ENCODE measurements at regions of chr4 and their contacts with region 1.

Region 1: DNA sequence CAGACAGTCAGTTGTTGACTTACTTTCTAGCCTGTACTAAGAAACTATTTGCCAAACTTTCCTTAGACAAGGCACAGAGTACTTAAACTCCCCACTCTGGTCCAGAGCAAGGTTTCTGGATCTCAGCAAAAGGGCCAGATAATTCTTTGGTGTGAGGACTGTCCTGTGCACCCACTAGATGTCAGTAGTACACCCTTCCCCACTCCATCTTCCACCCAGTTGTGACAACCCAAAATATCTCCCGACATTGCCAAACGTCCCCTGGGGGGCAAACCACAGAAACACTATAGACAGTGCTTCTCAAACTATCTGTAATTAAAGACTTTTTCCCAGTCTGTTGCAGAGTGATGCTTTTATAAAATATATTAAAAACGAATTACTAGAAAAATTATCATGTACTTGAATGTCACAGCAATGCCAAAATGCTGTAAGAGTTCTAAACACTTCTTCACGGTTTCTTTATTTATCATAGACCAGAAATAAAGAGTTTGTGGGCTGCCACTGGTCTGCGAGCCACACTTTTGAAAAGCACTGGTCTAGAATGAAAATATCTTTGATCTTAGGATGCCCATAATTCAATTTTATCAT is 203.5 kb downstream of the PRDM5 start:
- DNase-seq: peak in 3 of 5 donors; percentile 29 to 30 (median 29)
- ATAC-seq: peak; percentile 83 to 95 (median 87)
- H3K4me3 ChIP-seq: peak overlapping the region in 2 of 12 donors; percentile 5 to 25
- H3K27ac ChIP-seq: no peak overlapping the region
- H3K4me1 ChIP-seq: peaks cover 0 to 21% (median 2%) of the 10 kb centered on the region in 12 donors
- H3K27me3 ChIP-seq: no peaks in the 10 kb centered on the region
- CTCF ChIP-seq: peak; percentile 39 to 76 (median 64)
- POLR2A ChIP-seq: no peak

Region 2: GRCh38 chr4:120163895-120164294 is 555.2 kb before region 1 on chr4:
- intact Hi-C with region 1: loop called in 2 of 10 experiments (anchors 5 to 10 kb)
- DNase-seq: no peak
- ATAC-seq: peak in 2 of 4 donors; percentile 37 to 57
- H3K4me3 ChIP-seq: no peak overlapping the region
- H3K27ac ChIP-seq: no peak overlapping the region
- H3K4me1 ChIP-seq: peaks cover 0 to 13% (median 0%) of the 10 kb centered on the region in 12 donors
- H3K27me3 ChIP-seq: no peaks in the 10 kb centered on the region
- CTCF ChIP-seq: no peak
- POLR2A ChIP-seq: no peak

Region 3: DNA sequence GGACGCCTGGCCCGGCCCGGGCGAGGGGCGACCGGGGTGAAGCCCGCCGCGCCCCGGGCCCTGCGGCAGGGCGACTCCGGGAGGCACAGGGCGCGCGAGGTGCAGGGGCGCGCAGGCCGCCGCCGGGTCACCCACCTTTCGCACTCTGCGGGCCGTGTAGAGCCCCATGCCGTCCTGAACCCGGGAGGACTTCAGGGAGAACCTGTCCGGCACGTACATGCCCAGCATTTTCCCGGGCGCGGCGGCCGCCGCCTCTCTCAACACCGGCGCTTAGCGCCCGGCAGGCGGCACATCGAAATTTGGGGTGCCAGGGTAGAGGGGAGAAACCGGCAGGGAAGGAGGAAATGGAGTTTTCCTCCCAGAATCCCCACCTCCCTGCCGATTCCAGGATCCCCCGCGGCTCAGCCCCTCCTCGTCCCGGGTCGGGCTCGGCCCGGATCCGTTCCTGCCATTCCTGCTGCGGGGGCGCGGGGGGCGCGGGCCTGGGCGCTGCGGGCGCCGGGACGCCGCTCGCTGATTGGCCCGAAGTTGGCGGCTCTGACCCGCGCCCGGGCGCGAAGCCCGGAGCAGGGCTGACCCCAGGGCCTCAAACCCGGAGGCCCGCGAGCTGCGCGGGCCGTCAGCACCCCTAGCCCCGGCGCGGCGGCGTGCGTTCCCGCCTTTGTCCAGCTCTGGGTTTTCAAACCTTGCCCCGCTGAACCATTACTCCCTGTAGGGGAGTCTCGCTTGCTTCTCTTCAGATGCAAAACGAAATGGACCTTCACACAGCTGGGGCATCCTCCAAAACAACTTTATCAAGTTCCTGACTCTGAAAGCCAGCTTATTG is 203.5 kb after region 1 on chr4 and contains the start of gene PRDM5:
- intact Hi-C with region 1: loop called in 6 of 10 experiments (anchors 5 to 10 kb)
- DNase-seq: peak; percentile 69 to 82 (median 73)
- ATAC-seq: peak; percentile 49 to 84 (median 78)
- H3K4me3 ChIP-seq: peak within 1 kb of the TSS; percentile 61 to 97 (median 81)
- H3K27ac ChIP-seq: peak within 1 kb of the TSS; percentile 84 to 98 (median 95)
- H3K4me1 ChIP-seq: peaks cover 0 to 44% (median 32%) of the 10 kb centered on the region in 12 donors
- H3K27me3 ChIP-seq: peaks cover 0 to 20% (median 0%) of the 10 kb centered on the region in 9 donors
- CTCF ChIP-seq: peak in 4 of 12 donors; percentile 21 to 34 (median 28)
- POLR2A ChIP-seq: no peak
- total RNA-seq, gene PRDM5: 4.9 to 19.7 (median 12.0) TPM

Region 4: GRCh38 chr4:120977435-120977997 is 258.4 kb after region 1 on chr4:
- intact Hi-C with region 1: loop called in 1 of 10 experiments (anchors 2 kb)
- DNase-seq: no peak
- ATAC-seq: peak in 2 of 4 donors; percentile 15 to 28
- H3K4me3 ChIP-seq: no peak overlapping the region
- H3K27ac ChIP-seq: no peak overlapping the region
- H3K4me1 ChIP-seq: no peaks in the 10 kb centered on the region
- H3K27me3 ChIP-seq: no peaks in the 10 kb centered on the region
- CTCF ChIP-seq: peak in 11 of 12 donors; percentile 17 to 59 (median 39)
- POLR2A ChIP-seq: no peak

Region 5: GRCh38 chr4:121096629-121097028 is 377.6 kb after region 1 on chr4:
- intact Hi-C with region 1: loop called (anchors 2 to 10 kb)
- DNase-seq: no peak
- ATAC-seq: no peak
- H3K4me3 ChIP-seq: no peak overlapping the region
- H3K27ac ChIP-seq: no peak overlapping the region
- H3K4me1 ChIP-seq: no peaks in the 10 kb centered on the region
- H3K27me3 ChIP-seq: no peaks in the 10 kb centered on the region
- CTCF ChIP-seq: peak; percentile 45 to 83 (median 67)
- POLR2A ChIP-seq: no peak

Measured in heart left ventricle (tissue), 16 donors.